Naive thymus-derived CD4-positive, alpha-beta T cell (primary cell): ENCODE measurements at regions of chr1 and their contacts with region 1.

Region 1: GRCh38 chr1:25675729-25676476 is 59.3 kb downstream of the MAN1C1 start:
- DNase-seq: peak; percentile 24 to 91 (median 86)
- ATAC-seq: peak; percentile 89
- H3K4me3 ChIP-seq: peak overlapping the region; percentile 31
- H3K4me3 Mint-ChIP-seq: peak overlapping the region; percentile 80 to 92 (median 84)
- H3K27ac ChIP-seq: peak overlapping the region; percentile 67
- H3K27ac Mint-ChIP-seq: peak overlapping the region; percentile 70 to 98 (median 94)
- H3K4me1 ChIP-seq: peaks cover 34 to 89% of the 10 kb centered on the region in 2 donors
- H3K4me1 Mint-ChIP-seq: peaks cover 58 to 96% (median 94%) of the 10 kb centered on the region in 7 donors
- H3K27me3 ChIP-seq: no peaks in the 10 kb centered on the region
- H3K27me3 Mint-ChIP-seq: peaks cover 0 to 80% (median 0%) of the 10 kb centered on the region in 5 donors

Region 2: DNA sequence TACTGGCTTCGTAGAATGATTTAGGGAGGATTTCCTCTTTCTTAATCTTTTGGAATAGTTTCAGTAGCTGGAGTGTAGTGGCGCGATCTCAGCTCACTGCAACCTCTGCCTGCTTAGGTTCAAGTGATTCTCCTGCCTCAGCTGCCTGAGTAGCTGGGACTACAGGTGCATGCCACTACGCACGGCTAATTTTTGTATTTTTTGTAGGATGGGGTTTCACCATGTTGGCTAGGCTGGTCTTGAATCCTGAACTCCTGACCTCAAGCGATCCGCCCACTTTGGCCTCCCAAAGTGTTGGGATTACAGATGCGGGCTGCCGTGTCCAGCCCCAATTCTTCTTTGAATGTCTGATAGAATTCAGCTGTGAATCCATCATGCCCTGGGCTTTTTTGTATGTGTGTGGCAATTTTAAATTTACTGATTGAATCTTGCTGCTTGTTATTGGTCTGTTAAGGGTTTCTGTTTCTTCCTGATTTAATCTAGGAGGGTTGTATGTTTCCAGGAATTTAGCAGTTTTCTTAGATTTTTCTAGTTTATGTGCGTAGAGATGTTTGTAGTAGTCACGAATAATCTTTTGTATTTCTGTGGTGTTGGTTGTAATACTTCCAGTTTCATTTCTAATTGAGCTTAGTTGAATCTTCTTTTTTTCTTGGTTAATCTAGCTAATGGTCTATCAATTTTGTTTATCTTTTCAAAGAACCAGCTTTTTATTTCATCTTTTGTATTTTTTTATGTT is 44.0 kb before region 1 on chr1:
- CTCF ChIA-PET with region 1: interaction called, 4 read pairs
- POLR2A ChIA-PET with region 1: interaction called, 11 read pairs
- intact Hi-C with region 1: no loop called
- DNase-seq: peak in 4 of 9 donors; percentile 3 to 35 (median 25)
- ATAC-seq: peak; percentile 44
- H3K4me3 ChIP-seq: peak overlapping the region; percentile 51
- H3K4me3 Mint-ChIP-seq: peak overlapping the region; percentile 63 to 96 (median 84)
- H3K27ac ChIP-seq: peak overlapping the region; percentile 86
- H3K27ac Mint-ChIP-seq: peak overlapping the region; percentile 79 to 100 (median 97)
- H3K4me1 ChIP-seq: peaks cover 6 to 48% of the 10 kb centered on the region in 2 donors
- H3K4me1 Mint-ChIP-seq: peaks cover 55 to 91% (median 82%) of the 10 kb centered on the region in 7 donors
- H3K27me3 ChIP-seq: no peaks in the 10 kb centered on the region
- H3K27me3 Mint-ChIP-seq: peaks cover 0 to 44% (median 0%) of the 10 kb centered on the region in 5 donors

Region 3: DNA sequence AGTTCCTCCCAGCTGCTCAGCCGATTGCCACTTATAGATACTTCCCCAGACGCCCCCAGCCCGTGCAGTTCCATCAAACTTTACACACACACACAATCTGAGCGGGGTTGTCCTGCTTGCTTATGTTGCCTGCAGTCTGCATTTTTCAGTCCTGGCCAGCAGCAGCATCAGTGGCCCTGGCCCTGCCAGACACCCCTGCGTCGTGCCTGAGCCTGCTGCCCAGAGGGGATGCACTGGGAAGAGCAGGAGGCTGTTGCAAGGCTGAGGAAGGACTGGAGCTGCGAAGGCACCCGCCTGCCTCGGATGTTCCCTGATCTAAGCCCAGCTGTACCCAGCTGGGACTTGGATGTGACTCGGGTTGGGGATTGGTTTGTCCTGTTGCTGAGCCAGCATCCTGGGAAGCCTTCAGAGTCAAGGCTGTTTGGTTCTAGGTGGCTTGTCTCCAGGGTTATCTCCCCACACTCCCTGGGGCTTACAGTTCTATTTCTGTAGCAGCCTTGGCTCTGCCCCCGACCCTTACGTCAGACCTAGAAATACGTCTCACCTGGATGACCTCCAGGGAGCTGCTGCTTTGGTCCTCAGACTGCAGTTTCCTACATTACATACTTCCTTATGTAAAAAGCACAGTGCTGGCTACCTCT is 17.0 kb before region 1 on chr1:
- CTCF ChIA-PET with region 1: no interaction called
- POLR2A ChIA-PET with region 1: interaction called, 4 read pairs
- intact Hi-C with region 1: loop called in 1 of 2 experiments (anchors 2 kb)
- DNase-seq: no peak
- ATAC-seq: no peak
- H3K4me3 ChIP-seq: no peak overlapping the region
- H3K4me3 Mint-ChIP-seq: peak overlapping the region in 2 of 10 donors; percentile 15 to 44
- H3K27ac ChIP-seq: no peak overlapping the region
- H3K27ac Mint-ChIP-seq: peak overlapping the region; percentile 29 to 81 (median 75)
- H3K4me1 ChIP-seq: peaks cover 0 to 24% of the 10 kb centered on the region in 2 donors
- H3K4me1 Mint-ChIP-seq: peaks cover 8 to 88% (median 81%) of the 10 kb centered on the region in 7 donors
- H3K27me3 ChIP-seq: no peaks in the 10 kb centered on the region
- H3K27me3 Mint-ChIP-seq: peaks cover 0 to 54% (median 0%) of the 10 kb centered on the region in 5 donors

Region 4: DNA sequence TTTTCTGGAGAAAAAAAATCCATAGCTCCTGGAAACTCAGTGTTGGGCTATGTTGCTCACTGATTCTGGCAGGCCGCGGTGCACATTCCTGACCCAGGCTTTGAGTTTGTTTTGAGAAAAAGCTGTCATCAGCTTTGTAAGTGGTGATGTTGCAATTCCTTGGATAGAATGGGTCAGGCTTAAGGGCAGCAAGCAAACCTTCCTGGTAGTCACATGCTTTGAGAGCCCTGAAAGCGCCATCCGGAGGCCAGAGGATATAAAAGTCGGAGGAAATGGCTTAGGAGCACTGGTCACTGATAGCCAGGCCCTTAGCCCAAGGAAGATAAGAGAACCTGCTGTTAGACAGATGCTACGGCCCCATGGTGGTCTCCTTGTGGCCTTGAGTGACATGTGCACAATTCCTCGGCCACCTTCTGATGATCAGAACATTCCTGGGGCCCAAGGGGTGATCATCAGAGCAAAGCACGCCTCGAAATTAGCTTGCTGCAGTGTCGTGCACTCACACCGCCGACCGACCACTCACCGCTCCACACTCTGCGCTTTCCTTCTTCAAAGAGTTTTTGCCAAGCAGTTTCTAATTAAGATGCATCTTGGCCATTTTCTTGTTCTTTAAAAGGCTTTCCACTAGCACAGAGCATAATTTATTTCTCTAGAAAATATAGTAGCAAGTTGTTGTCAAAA is 19.3 kb after region 1 on chr1:
- CTCF ChIA-PET with region 1: interaction called, 10 read pairs
- POLR2A ChIA-PET with region 1: interaction called, 10 read pairs
- intact Hi-C with region 1: loop called in 1 of 2 experiments (anchors 2 kb)
- DNase-seq: no peak
- ATAC-seq: no peak
- H3K4me3 ChIP-seq: no peak overlapping the region
- H3K4me3 Mint-ChIP-seq: peak overlapping the region in 6 of 10 donors; percentile 1 to 69 (median 38)
- H3K27ac ChIP-seq: no peak overlapping the region
- H3K27ac Mint-ChIP-seq: peak overlapping the region in 8 of 9 donors; percentile 65 to 89 (median 74)
- H3K4me1 ChIP-seq: peaks cover 0 to 63% of the 10 kb centered on the region in 2 donors
- H3K4me1 Mint-ChIP-seq: peaks cover 29 to 88% (median 70%) of the 10 kb centered on the region in 7 donors
- H3K27me3 ChIP-seq: no peaks in the 10 kb centered on the region
- H3K27me3 Mint-ChIP-seq: peaks cover 0 to 53% (median 0%) of the 10 kb centered on the region in 5 donors

Region 5: DNA sequence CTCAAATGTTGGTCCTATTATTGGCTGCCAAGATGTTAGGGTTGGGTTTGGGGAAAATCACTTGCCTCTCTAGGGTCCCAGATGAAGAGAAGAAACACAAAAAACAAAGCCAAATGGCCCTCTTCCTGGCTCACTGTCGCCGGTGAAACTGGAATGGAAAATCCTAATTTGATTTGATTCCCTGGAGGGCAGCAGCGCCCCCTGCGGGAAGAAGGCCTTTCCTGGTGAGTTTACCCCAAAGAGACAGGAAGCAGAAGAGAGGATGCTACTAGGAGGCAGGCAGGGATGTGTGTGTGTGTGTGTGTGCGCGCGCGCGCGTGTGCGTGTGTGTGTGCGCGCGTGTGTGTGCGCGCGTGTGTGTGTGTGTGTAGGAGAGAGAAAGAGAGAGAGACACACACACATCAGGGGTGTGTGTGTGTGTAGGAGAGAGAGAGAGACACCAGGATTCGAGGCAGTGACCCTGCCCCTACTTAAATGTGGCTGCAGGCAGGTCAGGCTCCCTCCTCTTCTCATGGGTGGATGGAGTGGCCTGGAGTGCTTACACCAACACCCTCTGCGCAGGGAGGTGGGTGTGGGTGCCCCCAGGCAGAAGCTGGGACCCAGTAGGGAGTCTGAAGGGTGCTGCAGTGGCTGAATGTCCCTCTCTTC is 121.0 kb after region 1 on chr1:
- CTCF ChIA-PET with region 1: interaction called, 4 read pairs
- POLR2A ChIA-PET with region 1: interaction called, 4 read pairs
- intact Hi-C with region 1: loop called (anchors 2 to 5 kb)
- DNase-seq: peak; percentile 71 to 89 (median 86)
- ATAC-seq: peak; percentile 76
- H3K4me3 ChIP-seq: peak overlapping the region; percentile 15
- H3K4me3 Mint-ChIP-seq: peak overlapping the region; percentile 58 to 94 (median 81)
- H3K27ac ChIP-seq: peak overlapping the region; percentile 37
- H3K27ac Mint-ChIP-seq: peak overlapping the region; percentile 51 to 98 (median 93)
- H3K4me1 ChIP-seq: peaks cover 32 to 67% of the 10 kb centered on the region in 2 donors
- H3K4me1 Mint-ChIP-seq: peaks cover 30 to 88% (median 74%) of the 10 kb centered on the region in 7 donors
- H3K27me3 ChIP-seq: no peaks in the 10 kb centered on the region
- H3K27me3 Mint-ChIP-seq: peaks cover 0 to 29% (median 0%) of the 10 kb centered on the region in 5 donors

Region 6: GRCh38 chr1:25837262-25837875 is 161.5 kb after region 1 on chr1:
- CTCF ChIA-PET with region 1: no interaction called
- POLR2A ChIA-PET with region 1: no interaction called
- intact Hi-C with region 1: no loop called
- DNase-seq: no peak
- ATAC-seq: no peak
- H3K4me3 ChIP-seq: no peak overlapping the region
- H3K4me3 Mint-ChIP-seq: no peak overlapping the region
- H3K27ac ChIP-seq: no peak overlapping the region
- H3K27ac Mint-ChIP-seq: no peak overlapping the region
- H3K4me1 ChIP-seq: peaks cover 0 to 3% of the 10 kb centered on the region in 2 donors
- H3K4me1 Mint-ChIP-seq: peaks cover 0 to 13% (median 4%) of the 10 kb centered on the region in 7 donors
- H3K27me3 ChIP-seq: no peaks in the 10 kb centered on the region
- H3K27me3 Mint-ChIP-seq: no peaks in the 10 kb centered on the region